CD4-positive, alpha-beta memory T cell (primary cell): ENCODE measurements at regions of chr1 and their contacts with region 1.

Region 1: DNA sequence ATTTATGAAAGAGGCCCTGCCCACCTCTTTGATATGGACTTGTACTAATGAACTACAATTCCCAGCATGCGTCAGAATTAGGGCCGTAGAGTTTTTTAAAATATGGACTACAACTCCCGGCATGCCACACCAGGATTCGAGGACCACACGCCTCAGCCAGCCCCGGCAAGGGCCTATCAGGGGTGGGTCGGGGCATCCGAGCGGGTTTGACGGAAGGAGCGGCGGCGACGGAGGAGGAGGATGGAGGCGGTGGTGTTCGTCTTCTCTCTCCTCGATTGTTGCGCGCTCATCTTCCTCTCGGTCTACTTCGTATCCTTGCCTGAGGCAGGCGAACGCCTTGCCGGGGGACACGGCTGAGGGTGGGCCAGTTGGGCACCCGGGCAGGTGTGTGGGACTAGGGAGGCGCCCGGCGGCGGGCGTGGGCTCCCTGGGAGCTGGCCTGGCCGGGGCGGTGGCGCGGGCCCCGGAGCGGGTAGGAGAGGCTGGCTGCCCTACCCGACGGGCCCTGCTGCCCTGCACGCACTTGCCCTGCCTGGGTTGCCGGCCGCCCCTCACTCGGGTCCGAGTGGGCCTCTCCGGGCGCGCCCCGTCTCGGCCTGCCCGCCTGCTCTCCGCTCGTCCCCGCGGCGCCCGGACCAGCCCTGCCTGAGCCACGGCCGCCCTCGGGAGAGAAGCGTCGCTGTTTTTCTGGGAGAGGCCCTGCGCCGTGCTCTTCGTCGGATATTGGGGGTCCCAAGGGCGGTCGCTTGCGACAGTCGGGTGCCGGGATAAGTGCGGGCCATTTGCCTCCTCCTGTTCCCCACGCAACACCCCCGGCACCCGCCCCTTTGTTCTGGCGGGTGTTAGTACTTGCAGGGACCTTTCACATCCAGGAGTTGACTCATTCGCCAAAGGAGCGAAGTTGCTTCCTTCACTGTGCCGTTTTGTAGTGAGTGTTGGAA is at the start of gene CNIH4:
- DNase-seq: peak; percentile 92 to 95 (median 94)
- H3K4me3 ChIP-seq: peak within 1 kb of the TSS; percentile 51 to 63
- H3K4me3 Mint-ChIP-seq: peak within 1 kb of the TSS; percentile 90 to 99 (median 94)
- H3K27ac ChIP-seq: peak within 1 kb of the TSS; percentile 72
- H3K27ac Mint-ChIP-seq: peak within 1 kb of the TSS; percentile 73 to 98 (median 93)
- H3K4me1 ChIP-seq: peaks cover 27% of the 10 kb centered on the region
- H3K4me1 Mint-ChIP-seq: peaks cover 26 to 54% (median 39%) of the 10 kb centered on the region in 4 donors
- H3K27me3 ChIP-seq: no peaks in the 10 kb centered on the region
- H3K27me3 Mint-ChIP-seq: no peaks in the 10 kb centered on the region
- total RNA-seq, gene CNIH4: 45.5 to 50.9 TPM

Region 2: DNA sequence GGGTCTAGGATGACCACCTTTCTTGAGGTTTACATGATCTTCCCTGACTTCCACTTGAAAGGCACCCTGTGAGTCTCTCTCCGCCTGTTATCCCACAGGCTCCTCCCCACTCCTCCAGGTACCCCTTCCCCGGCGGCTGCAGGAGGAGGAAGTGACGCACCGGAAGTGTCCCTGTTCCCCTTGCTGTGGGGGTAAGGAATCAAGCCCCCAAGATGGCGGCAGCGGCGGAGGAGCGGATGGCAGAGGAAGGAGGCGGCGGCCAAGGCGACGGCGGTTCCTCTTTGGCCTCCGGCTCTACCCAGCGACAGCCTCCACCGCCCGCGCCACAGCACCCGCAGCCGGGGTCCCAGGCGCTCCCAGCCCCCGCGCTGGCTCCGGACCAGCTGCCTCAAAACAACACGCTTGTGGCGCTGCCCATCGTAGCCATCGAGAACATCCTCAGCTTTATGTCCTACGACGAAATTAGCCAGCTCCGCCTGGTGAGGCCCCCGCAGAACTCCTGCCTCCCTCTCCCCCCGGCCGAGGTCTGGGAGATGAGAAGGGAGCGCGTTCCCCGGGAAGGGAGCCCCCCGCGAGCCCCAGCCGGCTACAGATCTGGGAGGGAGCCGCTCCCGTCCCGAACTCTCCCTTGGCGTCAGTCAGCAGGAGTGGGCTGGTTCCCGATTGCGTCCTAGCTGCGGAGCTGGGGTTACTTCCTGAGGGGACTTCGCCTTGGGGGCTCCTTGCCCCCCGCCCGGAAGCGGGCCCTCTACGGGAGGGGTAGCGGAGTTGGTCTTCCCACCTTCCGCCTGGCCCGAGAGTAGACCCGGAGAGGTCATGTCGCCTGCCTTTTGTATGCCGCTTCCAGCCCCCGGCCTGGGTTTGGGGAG is 242.8 kb before region 1 on chr1 and contains the start of gene FBXO28:
- CTCF ChIA-PET with region 1: interaction called, 3 read pairs
- POLR2A ChIA-PET with region 1: interaction called, 4 read pairs
- intact Hi-C with region 1: loop called (anchors 1 kb)
- DNase-seq: peak; percentile 87 to 95 (median 89)
- H3K4me3 ChIP-seq: peak within 1 kb of the TSS; percentile 53 to 54
- H3K4me3 Mint-ChIP-seq: peak within 1 kb of the TSS; percentile 87 to 97 (median 94)
- H3K27ac ChIP-seq: peak within 1 kb of the TSS; percentile 97
- H3K27ac Mint-ChIP-seq: peak within 1 kb of the TSS; percentile 84 to 97 (median 95)
- H3K4me1 ChIP-seq: peaks cover 32% of the 10 kb centered on the region
- H3K4me1 Mint-ChIP-seq: peaks cover 17 to 32% (median 24%) of the 10 kb centered on the region in 4 donors
- H3K27me3 ChIP-seq: no peaks in the 10 kb centered on the region
- H3K27me3 Mint-ChIP-seq: peaks cover 0 to 2% of the 10 kb centered on the region in 2 donors
- total RNA-seq, gene FBXO28: 36.4 to 39.7 TPM

Region 3: GRCh38 chr1:224377676-224378006 is 20.7 kb after region 1 on chr1:
- CTCF ChIA-PET with region 1: interaction called, 5 read pairs
- POLR2A ChIA-PET with region 1: interaction called, 5 read pairs
- intact Hi-C with region 1: loop called (anchors 2 kb)
- DNase-seq: no peak
- H3K4me3 ChIP-seq: no peak overlapping the region
- H3K4me3 Mint-ChIP-seq: peak overlapping the region in 7 of 8 donors; percentile 39 to 83 (median 72)
- H3K27ac ChIP-seq: no peak overlapping the region
- H3K27ac Mint-ChIP-seq: peak overlapping the region; percentile 52 to 96 (median 87)
- H3K4me1 ChIP-seq: peaks cover 97% of the 10 kb centered on the region
- H3K4me1 Mint-ChIP-seq: peaks cover 66 to 97% (median 86%) of the 10 kb centered on the region in 4 donors
- H3K27me3 ChIP-seq: no peaks in the 10 kb centered on the region
- H3K27me3 Mint-ChIP-seq: no peaks in the 10 kb centered on the region

Region 4: GRCh38 chr1:224392411-224393249 is 35.7 kb after region 1 on chr1:
- CTCF ChIA-PET with region 1: no interaction called
- POLR2A ChIA-PET with region 1: interaction called, 3 read pairs
- intact Hi-C with region 1: loop called (anchors 5 kb)
- DNase-seq: no peak
- H3K4me3 ChIP-seq: no peak overlapping the region
- H3K4me3 Mint-ChIP-seq: no peak overlapping the region
- H3K27ac ChIP-seq: no peak overlapping the region
- H3K27ac Mint-ChIP-seq: peak overlapping the region in 5 of 7 donors; percentile 13 to 85 (median 29)
- H3K4me1 ChIP-seq: peaks cover 13% of the 10 kb centered on the region
- H3K4me1 Mint-ChIP-seq: peaks cover 10 to 27% (median 20%) of the 10 kb centered on the region in 4 donors
- H3K27me3 ChIP-seq: no peaks in the 10 kb centered on the region
- H3K27me3 Mint-ChIP-seq: no peaks in the 10 kb centered on the region

Region 5: DNA sequence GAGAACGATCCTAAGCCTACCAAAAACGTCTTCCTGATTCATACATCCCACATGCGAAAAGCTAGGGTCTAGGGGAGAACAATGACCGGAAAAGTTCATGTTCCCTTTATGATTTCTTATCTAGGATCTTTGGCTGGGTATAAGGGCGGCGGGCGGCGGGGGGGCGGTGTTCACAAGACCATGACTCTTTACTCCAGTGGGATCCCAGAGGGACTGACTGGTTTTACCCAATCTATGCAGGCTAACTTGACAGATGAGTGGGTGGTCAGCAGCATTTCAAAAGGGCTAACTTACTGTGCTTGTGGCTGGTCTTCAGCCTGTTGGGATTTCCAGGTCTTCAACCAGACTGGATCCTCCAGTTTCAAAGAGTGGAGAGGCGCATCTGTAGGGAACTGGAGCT is 299.4 kb after region 1 on chr1:
- CTCF ChIA-PET with region 1: no interaction called
- POLR2A ChIA-PET with region 1: no interaction called
- intact Hi-C with region 1: no loop called
- DNase-seq: no peak
- H3K4me3 ChIP-seq: no peak overlapping the region
- H3K4me3 Mint-ChIP-seq: no peak overlapping the region
- H3K27ac ChIP-seq: no peak overlapping the region
- H3K27ac Mint-ChIP-seq: no peak overlapping the region
- H3K4me1 ChIP-seq: no peaks in the 10 kb centered on the region
- H3K4me1 Mint-ChIP-seq: no peaks in the 10 kb centered on the region
- H3K27me3 ChIP-seq: peaks cover 3% of the 10 kb centered on the region
- H3K27me3 Mint-ChIP-seq: peaks cover 4 to 7% of the 10 kb centered on the region in 2 donors